Activated CD8-positive, alpha-beta T cell treated with anti-CD3 and anti-CD28 coated beads for 36 hours (primary cell): ENCODE measurements at regions of chr1 and their contacts with region 1.

Region 1: GRCh38 chr1:44652445-44653106 is 21.7 kb downstream of the TMEM53 start:
- DNase-seq: peak; percentile 84
- ATAC-seq: peak; percentile 98
- H3K4me3 Mint-ChIP-seq: no peak overlapping the region
- H3K27ac Mint-ChIP-seq: no peak overlapping the region
- H3K4me1 Mint-ChIP-seq: no peaks in the 10 kb centered on the region
- H3K27me3 Mint-ChIP-seq: no peaks in the 10 kb centered on the region
- CTCF ChIP-seq: peak; percentile 85

Region 2: GRCh38 chr1:44571712-44572571 is 80.6 kb before region 1 on chr1:
- CTCF ChIA-PET with region 1: interaction called, 65 read pairs
- POLR2A ChIA-PET with region 1: no interaction called
- intact Hi-C with region 1: no loop called
- DNase-seq: peak; percentile 18
- ATAC-seq: peak; percentile 68
- H3K4me3 Mint-ChIP-seq: no peak overlapping the region
- H3K27ac Mint-ChIP-seq: no peak overlapping the region
- H3K4me1 Mint-ChIP-seq: no peaks in the 10 kb centered on the region
- H3K27me3 Mint-ChIP-seq: no peaks in the 10 kb centered on the region
- CTCF ChIP-seq: peak; percentile 54

Region 3: GRCh38 chr1:44594871-44595746 is 57.5 kb before region 1 on chr1:
- CTCF ChIA-PET with region 1: interaction called, 13 read pairs
- POLR2A ChIA-PET with region 1: no interaction called
- intact Hi-C with region 1: no loop called
- DNase-seq: peak; percentile 85
- ATAC-seq: peak; percentile 97
- H3K4me3 Mint-ChIP-seq: no peak overlapping the region
- H3K27ac Mint-ChIP-seq: no peak overlapping the region
- H3K4me1 Mint-ChIP-seq: no peaks in the 10 kb centered on the region
- H3K27me3 Mint-ChIP-seq: no peaks in the 10 kb centered on the region
- CTCF ChIP-seq: peak; percentile 98

Region 4: DNA sequence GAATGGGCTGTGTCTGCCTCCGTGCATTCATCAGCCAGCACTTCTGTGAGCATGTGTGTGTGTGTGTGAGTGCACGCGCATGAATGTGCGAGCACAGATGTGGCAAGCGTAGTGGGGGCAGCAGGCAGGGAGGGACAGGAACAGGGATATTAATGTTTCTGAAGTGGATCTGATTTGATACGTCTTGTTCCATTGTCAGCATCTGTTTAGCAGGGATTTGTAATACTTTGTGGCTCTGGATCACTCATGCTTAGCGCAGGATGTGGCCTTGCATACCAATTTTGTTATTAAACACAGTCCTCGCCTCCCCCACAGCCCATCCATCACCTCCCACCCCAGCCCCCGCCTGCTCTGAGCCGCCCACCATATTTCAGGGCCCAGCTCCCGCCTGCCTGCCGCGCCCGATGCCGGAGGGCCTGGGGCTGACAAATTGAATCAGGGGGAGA is 30.7 kb before region 1 on chr1:
- CTCF ChIA-PET with region 1: interaction called, 17 read pairs
- POLR2A ChIA-PET with region 1: interaction called, 3 read pairs
- intact Hi-C with region 1: no loop called
- DNase-seq: no peak
- ATAC-seq: no peak
- H3K4me3 Mint-ChIP-seq: no peak overlapping the region
- H3K27ac Mint-ChIP-seq: no peak overlapping the region
- H3K4me1 Mint-ChIP-seq: no peaks in the 10 kb centered on the region
- H3K27me3 Mint-ChIP-seq: no peaks in the 10 kb centered on the region
- CTCF ChIP-seq: no peak

Region 5: GRCh38 chr1:44636688-44637598 is 15.6 kb before region 1 on chr1:
- CTCF ChIA-PET with region 1: interaction called, 156 read pairs
- POLR2A ChIA-PET with region 1: interaction called, 22 read pairs
- intact Hi-C with region 1: no loop called
- DNase-seq: no peak
- ATAC-seq: no peak
- H3K4me3 Mint-ChIP-seq: no peak overlapping the region
- H3K27ac Mint-ChIP-seq: no peak overlapping the region
- H3K4me1 Mint-ChIP-seq: peaks cover 31% of the 10 kb centered on the region
- H3K27me3 Mint-ChIP-seq: no peaks in the 10 kb centered on the region
- CTCF ChIP-seq: no peak

Region 6: GRCh38 chr1:44674113-44675000 is 21.8 kb after region 1 on chr1 and contains the starts of genes ARMH1 and TMEM53:
- CTCF ChIA-PET with region 1: interaction called, 62 read pairs
- POLR2A ChIA-PET with region 1: interaction called, 3 read pairs
- intact Hi-C with region 1: no loop called
- DNase-seq: peak; percentile 99
- ATAC-seq: peak; percentile 95
- H3K4me3 Mint-ChIP-seq: peak within 1 kb of the TSS; percentile 81
- H3K27ac Mint-ChIP-seq: peak within 1 kb of the TSS; percentile 89
- H3K4me1 Mint-ChIP-seq: peaks cover 20% of the 10 kb centered on the region
- H3K27me3 Mint-ChIP-seq: no peaks in the 10 kb centered on the region
- CTCF ChIP-seq: no peak
- total RNA-seq, gene ARMH1: 162 to 165 TPM
- total RNA-seq, gene TMEM53: 2.3 to 3.5 TPM

Region 7: GRCh38 chr1:44714944-44715571 is 62.5 kb after region 1 on chr1:
- CTCF ChIA-PET with region 1: interaction called, 11 read pairs
- POLR2A ChIA-PET with region 1: no interaction called
- intact Hi-C with region 1: no loop called
- DNase-seq: peak; percentile 79
- ATAC-seq: peak; percentile 90
- H3K4me3 Mint-ChIP-seq: peak overlapping the region; percentile 48
- H3K27ac Mint-ChIP-seq: peak overlapping the region; percentile 61
- H3K4me1 Mint-ChIP-seq: peaks cover 44% of the 10 kb centered on the region
- H3K27me3 Mint-ChIP-seq: no peaks in the 10 kb centered on the region
- CTCF ChIP-seq: peak; percentile 99